IMR-90 (cell line): ENCODE measurements at regions of chr13 and their contacts with region 1.

Region 1: GRCh38 chr13:32025730-32026129 is 5.8 kb upstream of the FRY start:
- DNase-seq: no peak
- ATAC-seq: no peak
- H3K4me3 ChIP-seq: no peak overlapping the region
- H3K27ac ChIP-seq: no peak overlapping the region
- H3K4me1 ChIP-seq: peaks cover 4% of the 10 kb centered on the region
- H3K27me3 ChIP-seq: no peaks in the 10 kb centered on the region
- CTCF ChIP-seq: no peak
- POLR2A ChIP-seq: no peak
- RAD21 ChIP-seq: no peak

Region 2: GRCh38 chr13:31797154-31797775 is 228.5 kb before region 1 on chr13:
- CTCF ChIA-PET with region 1: no interaction called
- POLR2A ChIA-PET with region 1: no interaction called
- dilution Hi-C with region 1: no loop called
- in situ Hi-C with region 1: no loop called
- intact Hi-C with region 1: no loop called
- DNase-seq: peak; percentile 55
- ATAC-seq: peak; percentile 82
- H3K4me3 ChIP-seq: no peak overlapping the region
- H3K27ac ChIP-seq: no peak overlapping the region
- H3K4me1 ChIP-seq: no peaks in the 10 kb centered on the region
- H3K27me3 ChIP-seq: peaks cover 8% of the 10 kb centered on the region
- CTCF ChIP-seq: peak; percentile 69
- POLR2A ChIP-seq: no peak
- RAD21 ChIP-seq: peak; percentile 76

Region 3: DNA sequence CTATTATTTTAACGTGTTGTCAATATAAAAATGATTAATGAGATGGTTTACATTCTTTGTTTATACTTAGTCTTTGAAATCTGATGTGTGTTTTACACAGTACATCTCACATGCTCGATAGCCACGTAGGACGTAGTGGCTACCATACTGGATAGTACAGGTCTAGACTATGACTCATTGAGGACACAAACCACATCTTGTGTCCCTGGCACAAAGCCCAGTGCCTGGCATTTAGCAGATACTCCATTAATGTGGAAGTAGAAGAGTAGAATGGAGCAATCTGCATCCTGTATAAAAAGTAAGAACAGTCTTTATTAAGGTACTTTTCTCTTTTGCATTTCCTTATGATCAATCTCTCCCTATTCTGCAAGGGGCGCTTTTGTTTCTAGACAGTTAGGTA is 43.2 kb before region 1 on chr13:
- CTCF ChIA-PET with region 1: no interaction called
- POLR2A ChIA-PET with region 1: no interaction called
- dilution Hi-C with region 1: no loop called
- in situ Hi-C with region 1: no loop called
- intact Hi-C with region 1: loop called (anchors 2 kb)
- DNase-seq: peak; percentile 95
- ATAC-seq: peak; percentile 90
- H3K4me3 ChIP-seq: no peak overlapping the region
- H3K27ac ChIP-seq: no peak overlapping the region
- H3K4me1 ChIP-seq: no peaks in the 10 kb centered on the region
- H3K27me3 ChIP-seq: peaks cover 6% of the 10 kb centered on the region; the same call in 1 of the 2 replicates
- CTCF ChIP-seq: no peak
- POLR2A ChIP-seq: no peak
- RAD21 ChIP-seq: no peak